Activated CD4-positive, alpha-beta T cell treated with anti-CD3 and anti-CD28 coated beads, Interleukin-2, amount 10 ng/mL, durations not matched to agents 24 days and 14 days (primary cell): ENCODE measurements at regions of chr15 and their contacts with region 1.

Region 1: DNA sequence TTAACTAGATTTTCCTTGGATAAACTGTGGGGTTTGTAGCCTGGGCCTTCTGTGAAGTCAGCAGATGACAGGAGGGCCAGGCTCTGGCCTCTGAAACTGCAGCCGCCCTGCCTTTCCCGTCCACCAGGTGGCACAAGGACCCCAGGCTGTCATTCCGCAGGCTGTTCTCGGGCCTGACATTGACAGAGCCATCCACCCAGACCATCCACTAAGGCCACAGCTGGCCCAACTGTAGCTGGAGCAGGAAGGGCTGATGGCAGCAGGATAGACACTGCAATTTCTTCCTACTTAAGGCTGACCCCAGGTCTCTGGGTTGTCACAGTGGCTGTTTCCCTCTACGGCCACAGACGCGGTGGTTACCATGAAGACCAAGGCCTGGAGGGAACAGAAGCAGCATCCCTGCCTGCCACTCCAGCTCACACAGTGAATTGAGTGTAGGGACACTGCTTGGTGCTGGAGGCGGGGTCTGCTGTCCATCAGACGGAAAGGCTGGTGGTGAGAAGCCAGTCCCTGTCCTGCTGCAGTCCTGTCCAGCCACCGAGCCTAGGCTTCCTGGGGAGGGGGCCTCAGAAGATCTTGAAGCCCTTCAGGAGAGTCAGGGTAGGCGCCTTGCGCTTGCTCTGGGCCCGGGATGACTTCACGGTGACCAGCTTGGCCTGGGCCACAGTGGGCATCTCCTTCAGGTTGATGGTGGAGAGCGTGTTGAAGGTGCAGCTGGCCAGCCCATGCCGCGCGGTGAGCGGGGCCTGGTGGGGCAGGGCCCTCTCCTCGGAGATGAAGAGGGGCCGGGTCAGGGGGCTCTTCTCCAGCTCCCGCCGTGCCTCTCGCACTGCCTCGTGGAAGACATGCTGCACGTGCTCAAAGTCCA is 9.4 kb downstream of the SLC51B start:
- DNase-seq: peak; percentile 89
- H3K4me3 Mint-ChIP-seq: no peak overlapping the region
- H3K27ac Mint-ChIP-seq: no peak overlapping the region
- H3K4me1 Mint-ChIP-seq: peaks cover 7% of the 10 kb centered on the region
- H3K27me3 Mint-ChIP-seq: peaks cover 4% of the 10 kb centered on the region

Region 2: DNA sequence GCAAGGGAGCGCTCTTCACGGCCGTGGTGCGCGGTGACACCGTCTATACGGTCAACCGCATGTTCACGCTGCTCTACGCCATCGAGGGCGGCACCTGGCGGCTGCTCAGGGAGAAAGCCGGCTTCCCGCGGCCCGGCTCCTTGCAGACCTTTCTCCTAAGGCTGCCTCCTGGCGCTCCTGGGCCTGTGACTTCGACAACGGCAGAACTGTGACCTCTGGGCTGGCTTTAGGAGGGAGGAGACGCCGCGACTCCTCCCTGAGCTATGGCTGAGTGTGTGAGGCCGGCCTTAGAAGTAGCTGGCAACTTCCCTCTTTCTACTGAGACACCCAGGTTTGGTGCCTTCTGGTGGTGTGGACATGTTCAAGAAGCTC is 23.4 kb after region 1 on chr15:
- intact Hi-C with region 1: loop called (anchors 1 kb)
- DNase-seq: peak; percentile 85
- H3K4me3 Mint-ChIP-seq: no peak overlapping the region
- H3K27ac Mint-ChIP-seq: no peak overlapping the region
- H3K4me1 Mint-ChIP-seq: peaks cover 15% of the 10 kb centered on the region
- H3K27me3 Mint-ChIP-seq: peaks cover 24% of the 10 kb centered on the region

Region 3: GRCh38 chr15:65101411-65101890 is 46.9 kb after region 1 on chr15:
- intact Hi-C with region 1: loop called (anchors 2 kb)
- DNase-seq: peak; percentile 85
- H3K4me3 Mint-ChIP-seq: no peak overlapping the region
- H3K27ac Mint-ChIP-seq: no peak overlapping the region
- H3K4me1 Mint-ChIP-seq: peaks cover 10% of the 10 kb centered on the region
- H3K27me3 Mint-ChIP-seq: no peaks in the 10 kb centered on the region

Region 4: DNA sequence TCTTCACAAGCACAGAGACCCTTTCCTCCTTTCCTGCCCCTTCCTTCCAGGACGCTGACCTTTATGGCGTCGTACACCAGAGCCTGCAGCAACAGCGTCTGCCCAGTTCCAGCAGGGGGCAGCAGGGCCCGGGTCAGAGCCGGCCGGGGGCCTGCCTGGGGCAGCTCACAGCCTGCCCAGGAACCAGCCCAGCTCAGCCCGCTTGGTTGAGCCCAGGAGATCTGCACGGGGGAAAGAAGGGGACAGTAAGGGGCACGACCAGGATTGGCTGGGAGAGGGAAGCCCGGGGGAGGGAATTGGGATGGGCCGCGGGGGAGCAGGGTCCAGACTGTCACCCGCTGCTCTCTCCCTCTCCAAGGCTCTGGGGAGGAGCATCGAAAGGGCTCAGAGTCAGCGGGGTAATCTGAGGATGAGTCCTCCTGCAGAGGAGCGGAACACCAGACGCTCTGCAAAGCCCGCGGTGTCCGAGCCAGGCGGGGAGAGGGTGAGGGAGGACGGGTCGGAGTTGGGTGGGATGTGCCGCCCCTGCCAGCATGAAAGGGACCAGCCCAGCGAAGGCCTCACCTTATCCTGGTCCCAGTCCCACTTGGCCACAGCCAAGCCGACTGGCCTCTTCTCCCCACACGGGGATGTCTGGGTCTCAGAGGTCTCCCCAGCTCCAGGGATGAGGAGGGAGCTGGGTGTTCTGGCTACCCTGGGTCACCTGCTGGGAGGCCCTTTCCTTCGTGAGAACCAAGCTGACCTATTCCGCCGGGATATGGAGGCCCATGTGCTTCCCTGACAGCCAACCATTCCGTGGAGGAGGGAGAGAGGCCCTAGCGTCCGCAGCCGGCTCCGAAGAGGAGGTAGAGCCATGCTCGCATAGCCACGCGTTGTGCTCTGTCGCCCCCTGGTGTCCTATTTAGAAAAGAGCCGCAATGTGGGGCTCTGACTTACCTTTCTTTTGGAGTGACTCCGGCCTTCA is 330.6 kb after region 1 on chr15:
- intact Hi-C with region 1: loop called (anchors 5 kb)
- DNase-seq: peak; percentile 95
- H3K4me3 Mint-ChIP-seq: peak overlapping the region; percentile 96
- H3K27ac Mint-ChIP-seq: peak overlapping the region; percentile 92
- H3K4me1 Mint-ChIP-seq: peaks cover 13% of the 10 kb centered on the region
- H3K27me3 Mint-ChIP-seq: peaks cover 34% of the 10 kb centered on the region